B cell (primary cell): ENCODE measurements at regions of chr6 and their contacts with region 1.

Region 1: GRCh38 chr6:34236131-34236996 is at the start of gene HMGA1:
- DNase-seq: peak; percentile 96
- ATAC-seq: peak; percentile 76
- H3K4me3 ChIP-seq: peak within 1 kb of the TSS; percentile 64 to 93 (median 88)
- H3K4me3 Mint-ChIP-seq: peak within 1 kb of the TSS; percentile 92
- H3K27ac ChIP-seq: peak within 1 kb of the TSS; percentile 96 to 98
- H3K27ac Mint-ChIP-seq: peak within 1 kb of the TSS; percentile 98
- H3K4me1 ChIP-seq: peaks cover 22 to 30% of the 10 kb centered on the region in 2 donors
- H3K4me1 Mint-ChIP-seq: peaks cover 34% of the 10 kb centered on the region
- H3K27me3 ChIP-seq: no peaks in the 10 kb centered on the region
- H3K27me3 Mint-ChIP-seq: no peaks in the 10 kb centered on the region
- CTCF ChIP-seq: no peak
- total RNA-seq, gene HMGA1: 66.4 and 72.3 TPM in 2 replicates

Region 2: DNA sequence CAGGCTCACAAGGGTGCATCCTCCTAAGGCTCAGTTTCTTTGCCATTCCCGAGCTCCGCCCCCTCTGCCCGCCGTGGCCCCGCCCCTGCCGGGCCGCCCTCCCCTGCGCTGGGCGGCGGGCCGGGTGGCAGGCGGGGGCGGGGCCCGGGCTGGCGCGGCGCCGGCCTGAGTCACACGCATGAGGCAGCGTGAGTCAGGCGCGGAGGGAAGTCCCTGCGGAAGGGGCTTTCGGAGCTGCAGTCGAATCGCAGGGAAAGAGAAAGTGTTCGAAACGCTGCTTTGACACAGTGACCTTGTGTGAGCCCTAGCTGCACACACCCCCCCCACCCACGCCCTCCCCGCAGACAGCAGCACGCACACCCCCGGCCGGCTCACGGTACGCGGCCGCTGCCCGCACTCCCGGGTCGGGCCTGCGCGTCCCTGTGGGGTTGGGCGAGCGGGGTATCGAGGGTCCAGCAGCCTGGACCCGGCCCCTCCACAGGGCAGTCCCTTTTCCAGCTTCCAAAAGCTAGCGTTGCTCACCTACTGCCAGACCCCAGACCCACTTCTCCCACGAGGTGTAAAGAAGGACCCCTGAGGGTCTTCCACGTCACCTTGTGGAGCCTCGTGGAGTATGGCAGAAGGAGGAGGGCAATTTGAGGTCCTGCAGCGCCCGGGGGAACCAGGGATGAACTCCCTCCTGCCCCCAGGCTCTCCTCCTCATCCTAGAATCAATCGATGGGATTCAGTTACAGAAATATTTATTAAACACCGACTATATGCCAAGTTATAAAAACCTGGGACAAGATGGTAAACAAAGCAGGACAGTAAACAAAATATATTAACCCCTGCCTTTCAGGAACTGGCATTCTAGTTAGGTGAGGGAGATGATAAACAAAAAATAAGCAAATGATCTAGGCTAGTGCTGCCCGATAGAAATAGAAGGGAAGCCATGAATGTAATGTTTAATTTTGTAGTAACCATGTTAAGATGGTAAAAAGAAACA is 12.1 kb before region 1 on chr6:
- CTCF ChIA-PET with region 1: interaction called, 14 read pairs
- POLR2A ChIA-PET with region 1: interaction called, 41 read pairs
- intact Hi-C with region 1: loop called (anchors 1 kb)
- DNase-seq: peak; percentile 98
- ATAC-seq: peak; percentile 96
- H3K4me3 ChIP-seq: peak overlapping the region in 4 of 5 experiments; percentile 59 to 76 (median 74)
- H3K4me3 Mint-ChIP-seq: peak overlapping the region; percentile 57
- H3K27ac ChIP-seq: peak overlapping the region; percentile 96 to 99
- H3K27ac Mint-ChIP-seq: peak overlapping the region; percentile 91
- H3K4me1 ChIP-seq: peaks cover 33 to 42% of the 10 kb centered on the region in 2 donors
- H3K4me1 Mint-ChIP-seq: peaks cover 49% of the 10 kb centered on the region
- H3K27me3 ChIP-seq: no peaks in the 10 kb centered on the region
- H3K27me3 Mint-ChIP-seq: no peaks in the 10 kb centered on the region
- CTCF ChIP-seq: no peak

Region 3: DNA sequence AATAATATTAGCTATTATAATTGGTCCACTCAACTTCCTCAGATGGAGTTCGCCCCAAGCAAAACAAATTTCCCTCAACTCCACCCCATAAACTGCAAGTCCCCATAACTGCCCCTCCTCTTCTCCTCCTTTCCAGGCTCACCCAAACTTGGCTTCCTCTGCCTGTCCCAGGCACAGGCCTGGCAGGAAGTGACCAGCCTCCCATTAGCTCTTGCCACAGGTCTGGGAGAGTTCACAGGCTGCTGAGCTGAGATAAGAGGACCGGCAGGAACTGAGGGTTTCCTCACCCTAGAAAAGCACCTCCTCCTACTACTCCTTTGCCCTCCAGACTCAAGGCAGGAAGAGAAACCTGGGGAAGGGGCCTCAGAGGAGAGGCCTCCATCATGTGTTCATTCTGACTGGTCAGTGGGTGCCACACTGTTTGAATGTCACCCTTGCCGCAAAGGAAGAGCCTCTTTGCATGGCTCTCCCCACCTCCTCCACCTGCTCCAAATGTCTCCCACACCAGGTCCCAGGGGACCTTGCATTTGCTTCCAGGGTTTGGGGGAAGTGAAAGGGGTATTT is 37.0 kb after region 1 on chr6:
- CTCF ChIA-PET with region 1: no interaction called
- POLR2A ChIA-PET with region 1: no interaction called
- intact Hi-C with region 1: no loop called
- DNase-seq: no peak
- ATAC-seq: no peak
- H3K4me3 ChIP-seq: no peak overlapping the region
- H3K4me3 Mint-ChIP-seq: no peak overlapping the region
- H3K27ac ChIP-seq: no peak overlapping the region
- H3K27ac Mint-ChIP-seq: no peak overlapping the region
- H3K4me1 ChIP-seq: peaks cover 11 to 21% of the 10 kb centered on the region in 2 donors
- H3K4me1 Mint-ChIP-seq: peaks cover 31% of the 10 kb centered on the region
- H3K27me3 ChIP-seq: no peaks in the 10 kb centered on the region
- H3K27me3 Mint-ChIP-seq: no peaks in the 10 kb centered on the region
- CTCF ChIP-seq: no peak

Region 4: DNA sequence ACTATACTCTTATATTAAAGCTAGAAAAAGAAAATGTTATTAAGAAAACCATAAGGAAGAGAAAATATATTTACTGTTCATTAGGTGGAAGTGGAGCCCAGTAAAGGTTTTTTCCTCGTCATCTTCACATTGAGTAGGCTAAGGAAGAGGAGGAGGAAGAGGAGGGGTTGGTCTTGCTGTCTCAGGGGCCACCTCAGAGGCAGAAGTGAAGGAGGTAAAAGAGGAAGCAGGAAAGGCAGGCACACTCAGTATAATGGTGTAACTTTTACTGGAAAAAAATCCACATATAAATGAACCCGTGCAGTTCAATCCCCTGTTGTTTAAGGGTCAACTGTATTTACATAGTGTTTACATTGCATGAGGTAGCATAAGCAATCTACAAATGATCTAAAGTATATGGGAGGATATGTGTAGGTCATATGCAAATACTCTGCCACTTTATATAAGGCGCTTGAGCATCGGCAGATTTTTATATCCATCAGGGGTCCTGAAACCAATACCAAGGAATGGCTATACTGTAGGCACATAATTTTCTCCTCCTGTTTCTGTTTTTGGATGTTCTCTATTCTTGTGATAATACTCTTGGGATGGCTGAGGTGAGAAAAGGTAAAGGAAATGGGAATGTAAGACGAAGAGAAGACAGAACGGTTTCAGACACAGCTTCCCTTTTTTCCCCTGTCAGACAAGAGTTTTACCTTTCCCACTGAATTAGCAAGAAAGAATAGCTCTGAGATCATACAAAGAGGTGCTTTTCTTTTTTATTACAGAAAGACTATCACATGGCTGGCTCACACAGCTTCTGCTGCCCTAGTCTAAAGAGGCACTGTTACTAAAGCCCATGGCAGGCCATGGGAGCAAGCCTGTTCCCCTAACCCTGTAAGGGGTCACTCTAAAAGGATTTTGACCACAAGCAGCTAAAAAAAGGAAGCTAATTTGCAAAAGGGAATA is 96.2 kb after region 1 on chr6:
- CTCF ChIA-PET with region 1: no interaction called
- POLR2A ChIA-PET with region 1: no interaction called
- intact Hi-C with region 1: no loop called
- DNase-seq: peak; percentile 47
- ATAC-seq: peak; percentile 38
- H3K4me3 ChIP-seq: peak overlapping the region in 4 of 5 experiments; percentile 2 to 50 (median 21)
- H3K4me3 Mint-ChIP-seq: peak overlapping the region; percentile 63
- H3K27ac ChIP-seq: peak overlapping the region; percentile 36 to 65
- H3K27ac Mint-ChIP-seq: peak overlapping the region; percentile 68
- H3K4me1 ChIP-seq: peaks cover 28 to 33% of the 10 kb centered on the region in 2 donors
- H3K4me1 Mint-ChIP-seq: peaks cover 46% of the 10 kb centered on the region
- H3K27me3 ChIP-seq: no peaks in the 10 kb centered on the region
- H3K27me3 Mint-ChIP-seq: no peaks in the 10 kb centered on the region
- CTCF ChIP-seq: no peak

Region 5: DNA sequence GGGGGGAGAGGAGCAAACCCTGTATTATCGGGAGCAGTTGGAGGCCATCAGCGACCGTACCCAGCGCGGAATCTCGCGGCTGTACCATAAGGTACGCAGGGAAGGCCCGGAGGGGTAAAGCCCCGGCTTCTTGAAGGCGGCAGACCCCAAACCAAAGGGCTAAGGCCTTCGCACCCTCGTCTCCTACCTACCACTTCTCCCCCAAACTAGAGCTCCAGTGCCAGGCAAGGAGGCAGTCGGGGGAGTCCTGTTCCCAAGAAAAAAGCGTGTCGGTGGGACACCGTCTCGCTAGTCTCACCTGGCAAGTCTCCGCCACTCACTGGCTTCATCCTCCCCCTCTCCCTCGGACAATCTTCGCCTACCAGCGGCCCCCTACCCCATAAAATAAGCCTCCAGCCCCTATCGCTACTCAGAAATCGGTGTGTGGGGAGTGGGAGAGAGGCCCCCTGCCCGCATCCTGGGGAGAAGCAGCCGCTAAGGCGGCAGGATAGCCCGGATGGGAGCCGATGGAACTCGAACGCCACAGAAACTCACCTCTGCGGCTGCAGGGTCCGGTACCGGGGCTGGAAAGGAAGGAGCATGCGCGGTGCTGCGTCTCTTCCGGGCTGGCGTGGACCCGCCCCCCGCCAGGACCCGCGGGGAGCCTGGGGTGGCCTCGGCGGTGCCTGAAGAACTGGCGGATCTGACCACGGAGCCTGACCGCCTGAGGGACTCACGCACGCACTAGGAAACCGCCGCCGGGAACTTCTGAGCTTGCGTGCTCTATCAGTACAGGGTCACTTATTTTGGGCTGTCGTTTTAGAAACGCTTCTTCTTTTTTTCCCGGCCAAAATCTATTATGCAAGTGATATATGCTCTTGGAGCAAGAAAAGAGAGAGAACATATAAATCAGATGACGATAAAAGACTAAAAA is 189.4 kb after region 1 on chr6 and contains the start of gene RPS10:
- CTCF ChIA-PET with region 1: no interaction called
- POLR2A ChIA-PET with region 1: interaction called, 3 read pairs
- intact Hi-C with region 1: loop called (anchors 1 kb)
- DNase-seq: peak; percentile 94
- ATAC-seq: peak; percentile 99
- H3K4me3 ChIP-seq: peak within 1 kb of the TSS; percentile 80 to 94 (median 90)
- H3K4me3 Mint-ChIP-seq: peak within 1 kb of the TSS; percentile 86
- H3K27ac ChIP-seq: peak within 1 kb of the TSS; percentile 77 to 82
- H3K27ac Mint-ChIP-seq: peak within 1 kb of the TSS; percentile 95
- H3K4me1 ChIP-seq: peaks cover 10 to 23% of the 10 kb centered on the region in 2 donors
- H3K4me1 Mint-ChIP-seq: peaks cover 21% of the 10 kb centered on the region
- H3K27me3 ChIP-seq: no peaks in the 10 kb centered on the region
- H3K27me3 Mint-ChIP-seq: no peaks in the 10 kb centered on the region
- CTCF ChIP-seq: no peak
- total RNA-seq, gene RPS10: 2,661 and 2,707 TPM in 2 replicates